Activated CD8-positive, alpha-beta T cell treated with anti-CD3 and anti-CD28 coated beads for 36 hours (primary cell): ENCODE measurements at regions of chr6 and their contacts with region 1.

Region 1: DNA sequence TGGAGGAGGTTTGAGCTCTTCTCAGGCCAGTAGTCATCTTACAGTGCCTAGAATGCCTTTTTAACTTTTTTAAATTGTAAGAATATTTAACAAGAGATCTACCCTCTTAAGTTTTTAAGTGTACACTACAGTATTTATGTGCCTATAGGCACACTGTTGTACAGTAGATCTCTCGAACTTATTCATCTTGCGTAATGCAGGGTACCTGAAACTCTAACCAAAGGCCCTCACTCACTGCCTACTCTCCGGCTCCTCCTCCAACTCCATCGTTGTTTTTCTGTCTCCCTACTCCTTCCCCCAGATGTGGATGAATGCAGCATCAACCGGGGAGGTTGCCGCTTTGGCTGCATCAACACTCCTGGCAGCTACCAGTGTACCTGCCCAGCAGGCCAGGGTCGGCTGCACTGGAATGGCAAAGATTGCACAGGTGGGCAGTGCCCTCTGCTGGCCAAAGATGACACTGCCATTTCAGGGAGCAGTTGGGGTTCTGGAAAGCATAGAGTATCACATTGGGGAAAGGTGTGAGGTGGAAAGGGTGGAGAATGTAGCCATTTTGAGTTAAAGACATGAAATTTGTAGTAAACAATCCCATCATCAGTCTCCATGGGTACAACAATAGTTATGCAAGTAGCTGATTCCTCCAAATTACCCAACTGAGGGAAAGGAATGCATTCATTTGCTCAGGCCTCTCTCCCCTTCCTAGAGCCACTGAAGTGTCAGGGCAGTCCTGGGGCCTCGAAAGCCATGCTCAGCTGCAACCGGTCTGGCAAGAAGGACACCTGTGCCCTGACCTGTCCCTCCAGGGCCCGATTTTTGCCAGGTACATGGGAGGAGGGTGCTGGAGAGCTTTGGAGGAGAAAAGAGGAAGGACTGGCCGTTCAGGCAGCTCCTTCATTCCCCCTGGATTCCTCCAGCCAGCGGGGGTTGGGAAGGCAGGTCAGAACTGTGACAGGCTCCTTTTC is 18.4 kb upstream of the ZNF76 start:
- DNase-seq: peak; percentile 84
- ATAC-seq: peak; percentile 95
- H3K4me3 Mint-ChIP-seq: no peak overlapping the region
- H3K27ac Mint-ChIP-seq: no peak overlapping the region
- H3K4me1 Mint-ChIP-seq: no peaks in the 10 kb centered on the region
- H3K27me3 Mint-ChIP-seq: no peaks in the 10 kb centered on the region
- CTCF ChIP-seq: peak; percentile 98

Region 2: GRCh38 chr6:34986845-34987246 is 254.3 kb before region 1 on chr6:
- CTCF ChIA-PET with region 1: interaction called, 43 read pairs
- POLR2A ChIA-PET with region 1: no interaction called
- intact Hi-C with region 1: no loop called
- DNase-seq: peak; percentile 81
- ATAC-seq: peak; percentile 84
- H3K4me3 Mint-ChIP-seq: no peak overlapping the region
- H3K27ac Mint-ChIP-seq: no peak overlapping the region
- H3K4me1 Mint-ChIP-seq: no peaks in the 10 kb centered on the region
- H3K27me3 Mint-ChIP-seq: no peaks in the 10 kb centered on the region
- CTCF ChIP-seq: peak; percentile 83

Region 3: DNA sequence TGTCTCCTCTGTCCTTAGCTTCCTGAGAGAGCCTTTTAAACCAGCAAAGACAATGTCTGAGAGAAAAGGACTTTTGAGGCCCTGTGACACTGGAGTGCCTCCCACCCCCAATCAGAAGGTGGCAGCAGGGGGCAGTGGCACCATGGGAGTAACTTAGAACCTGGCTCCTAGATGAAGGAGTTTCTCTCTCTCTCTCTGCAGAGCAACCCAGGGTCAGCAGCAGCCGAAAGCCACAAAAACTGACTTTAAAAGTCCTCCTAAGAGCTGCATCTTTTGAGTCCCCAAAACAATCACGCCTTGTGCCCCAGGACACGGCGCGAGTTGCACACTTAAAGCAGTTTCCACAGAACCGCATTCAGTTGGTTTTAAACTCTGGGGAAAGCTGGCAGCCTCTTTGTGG is 94.7 kb before region 1 on chr6:
- CTCF ChIA-PET with region 1: interaction called, 74 read pairs
- POLR2A ChIA-PET with region 1: interaction called, 3 read pairs
- intact Hi-C with region 1: loop called (anchors 5 kb)
- DNase-seq: peak; percentile 64
- ATAC-seq: peak; percentile 45
- H3K4me3 Mint-ChIP-seq: no peak overlapping the region
- H3K27ac Mint-ChIP-seq: no peak overlapping the region
- H3K4me1 Mint-ChIP-seq: peaks cover 21% of the 10 kb centered on the region
- H3K27me3 Mint-ChIP-seq: peaks cover 5% of the 10 kb centered on the region
- CTCF ChIP-seq: peak; percentile 59

Region 4: GRCh38 chr6:35213824-35214756 is 27.0 kb before region 1 on chr6 and contains the start of gene SCUBE3:
- CTCF ChIA-PET with region 1: interaction called, 77 read pairs
- POLR2A ChIA-PET with region 1: no interaction called
- intact Hi-C with region 1: no loop called
- DNase-seq: peak; percentile 24
- ATAC-seq: peak; percentile 37
- H3K4me3 Mint-ChIP-seq: peak within 1 kb of the TSS; percentile 39
- H3K27ac Mint-ChIP-seq: no peak within 1 kb of the TSS
- H3K4me1 Mint-ChIP-seq: peaks cover 6% of the 10 kb centered on the region
- H3K27me3 Mint-ChIP-seq: peaks cover 59% of the 10 kb centered on the region
- CTCF ChIP-seq: no peak
- total RNA-seq, gene SCUBE3: not detected

Region 5: DNA sequence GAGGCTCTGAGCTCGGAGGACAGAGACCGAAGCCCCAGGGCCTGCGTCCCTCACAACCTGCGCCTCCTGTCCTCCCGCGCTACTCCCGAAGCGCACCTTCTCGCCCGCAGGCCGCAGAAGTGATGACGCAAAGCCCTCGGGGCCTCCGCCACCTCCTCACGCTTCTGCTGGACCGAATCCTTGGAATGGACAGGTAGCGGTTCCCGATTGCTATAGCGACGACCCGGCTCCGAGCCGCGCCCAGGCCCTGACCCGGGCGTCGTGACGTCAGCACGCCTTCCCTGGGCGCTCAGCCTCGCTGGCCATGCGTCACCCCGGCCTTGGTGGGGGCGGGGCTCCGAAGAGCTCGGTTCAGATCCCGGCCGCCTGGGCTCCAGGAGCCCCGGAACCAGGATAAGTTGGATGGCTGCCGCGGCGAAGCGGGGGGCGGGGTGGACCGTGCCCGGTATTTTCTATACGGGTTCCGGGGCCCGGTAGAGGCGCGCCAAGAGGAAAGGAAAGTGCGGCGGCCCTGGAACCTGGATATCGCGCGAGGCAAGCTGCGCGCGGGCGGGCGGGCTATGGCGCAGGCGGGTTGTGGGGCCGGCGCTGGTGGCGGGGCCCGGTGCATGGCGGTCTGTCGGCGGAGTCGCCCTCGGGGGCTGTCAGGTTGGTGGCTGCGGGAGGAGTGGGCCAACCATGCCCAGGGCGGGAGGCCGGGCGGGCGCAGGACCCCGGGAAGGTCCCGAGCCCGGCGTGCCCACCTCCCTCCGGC is 18.2 kb after region 1 on chr6 and contains the start of gene ZNF76:
- CTCF ChIA-PET with region 1: interaction called, 52 read pairs
- POLR2A ChIA-PET with region 1: no interaction called
- intact Hi-C with region 1: no loop called
- DNase-seq: peak; percentile 94
- ATAC-seq: peak; percentile 84
- H3K4me3 Mint-ChIP-seq: peak within 1 kb of the TSS; percentile 94
- H3K27ac Mint-ChIP-seq: peak within 1 kb of the TSS; percentile 94
- H3K4me1 Mint-ChIP-seq: peaks cover 44% of the 10 kb centered on the region
- H3K27me3 Mint-ChIP-seq: no peaks in the 10 kb centered on the region
- CTCF ChIP-seq: no peak
- total RNA-seq, gene ZNF76: 34.4 to 35.2 TPM

Region 6: GRCh38 chr6:35302604-35303241 is 61.6 kb after region 1 on chr6:
- CTCF ChIA-PET with region 1: no interaction called
- POLR2A ChIA-PET with region 1: no interaction called
- intact Hi-C with region 1: no loop called
- DNase-seq: peak; percentile 98
- ATAC-seq: peak; percentile 81
- H3K4me3 Mint-ChIP-seq: peak overlapping the region; percentile 76
- H3K27ac Mint-ChIP-seq: peak overlapping the region; percentile 93
- H3K4me1 Mint-ChIP-seq: peaks cover 69% of the 10 kb centered on the region
- H3K27me3 Mint-ChIP-seq: no peaks in the 10 kb centered on the region
- CTCF ChIP-seq: no peak

Region 7: GRCh38 chr6:35445696-35446095 is 204.6 kb after region 1 on chr6:
- CTCF ChIA-PET with region 1: no interaction called
- POLR2A ChIA-PET with region 1: no interaction called
- intact Hi-C with region 1: no loop called
- DNase-seq: peak; percentile 73
- ATAC-seq: peak; percentile 48
- H3K4me3 Mint-ChIP-seq: no peak overlapping the region
- H3K27ac Mint-ChIP-seq: no peak overlapping the region
- H3K4me1 Mint-ChIP-seq: peaks cover 6% of the 10 kb centered on the region
- H3K27me3 Mint-ChIP-seq: no peaks in the 10 kb centered on the region
- CTCF ChIP-seq: no peak